GM12878 (cell line): ENCODE measurements at regions of chr12 and their contacts with region 1.

Region 1: DNA sequence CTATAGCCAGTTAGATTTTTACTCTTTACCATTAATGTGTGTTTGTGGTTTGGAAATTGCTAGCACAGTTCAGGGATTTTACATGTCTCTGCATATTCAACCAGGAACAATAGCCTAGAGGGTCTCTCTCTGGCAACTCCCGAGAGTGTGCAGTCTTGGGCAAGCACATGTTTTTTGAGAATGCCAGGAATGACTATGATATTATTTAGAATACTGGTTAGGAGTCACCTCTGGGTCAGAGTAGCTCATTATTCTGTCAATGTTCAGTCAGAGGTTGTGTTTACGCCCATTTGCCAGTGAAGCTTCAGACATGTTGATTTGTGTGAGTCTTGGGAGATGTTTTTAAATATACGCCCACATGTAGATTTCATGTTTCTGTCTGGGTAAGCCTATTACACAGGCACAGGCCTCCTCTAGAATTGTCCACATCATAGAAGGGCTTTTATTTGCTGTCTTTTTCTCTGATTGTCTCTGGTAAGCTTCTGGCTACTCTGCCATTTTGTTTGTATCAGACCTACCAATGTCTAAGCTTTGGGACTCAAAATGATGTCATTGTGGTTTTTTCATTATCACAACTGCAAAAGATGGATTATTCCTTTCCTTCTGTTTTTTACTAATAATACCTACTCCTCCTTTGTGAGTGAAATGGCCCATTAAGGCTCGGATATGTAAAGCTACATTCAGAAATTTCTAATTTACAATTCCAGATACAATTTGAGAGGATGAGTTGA is 203.1 kb upstream of the PPFIA2 start:
- DNase-seq: no peak
- ATAC-seq: peak; percentile 51
- H3K4me3 ChIP-seq: no peak overlapping the region
- H3K27ac ChIP-seq: no peak overlapping the region
- H3K4me1 ChIP-seq: no peaks in the 10 kb centered on the region
- H3K27me3 ChIP-seq: no peaks in the 10 kb centered on the region
- CTCF ChIP-seq: no peak
- EP300 ChIP-seq: no peak
- POLR2A ChIP-seq: no peak
- RAD21 ChIP-seq: no peak

Region 2: DNA sequence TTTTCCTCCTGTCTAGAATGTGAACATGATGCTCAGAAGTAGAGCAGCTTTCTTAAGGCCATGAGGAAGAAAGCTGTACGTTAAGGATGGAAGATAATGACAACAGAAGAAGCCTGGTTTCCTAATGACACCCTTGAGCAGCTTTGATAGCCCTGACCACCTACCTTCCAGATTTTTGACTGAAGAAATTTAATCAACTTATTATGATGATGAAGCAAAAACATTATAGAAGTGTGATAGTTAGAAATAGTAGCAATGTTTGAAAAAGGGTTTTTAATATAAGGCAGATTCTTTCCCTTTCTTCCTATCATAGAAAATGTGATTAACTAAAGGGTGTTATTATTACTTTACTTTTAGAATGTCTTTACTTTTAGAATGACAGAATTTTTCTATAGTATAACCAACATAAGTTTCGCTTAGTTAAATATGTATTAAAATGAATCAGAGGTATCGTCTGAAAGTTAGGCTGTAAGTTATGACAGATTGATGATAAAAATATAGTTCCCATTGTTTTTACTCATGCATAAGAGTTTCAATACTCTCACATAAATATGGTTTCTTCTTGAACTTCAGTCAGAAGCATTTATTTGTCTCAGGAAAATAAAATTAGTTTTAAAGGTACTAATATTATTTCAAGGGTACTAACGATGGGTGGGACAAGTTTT is 153.0 kb before region 1 on chr12:
- CTCF ChIA-PET with region 1: no interaction called
- POLR2A ChIA-PET with region 1: no interaction called
- RAD21 ChIA-PET with region 1: no interaction called
- SMC1A ChIA-PET with region 1: no interaction called
- in situ Hi-C with region 1: no loop called
- intact Hi-C with region 1: no loop called
- DNase-seq: no peak
- ATAC-seq: peak; percentile 69
- H3K4me3 ChIP-seq: no peak overlapping the region
- H3K27ac ChIP-seq: no peak overlapping the region
- H3K4me1 ChIP-seq: no peaks in the 10 kb centered on the region
- H3K27me3 ChIP-seq: no peaks in the 10 kb centered on the region
- CTCF ChIP-seq: no peak
- EP300 ChIP-seq: no peak
- POLR2A ChIP-seq: no peak
- RAD21 ChIP-seq: no peak

Region 3: DNA sequence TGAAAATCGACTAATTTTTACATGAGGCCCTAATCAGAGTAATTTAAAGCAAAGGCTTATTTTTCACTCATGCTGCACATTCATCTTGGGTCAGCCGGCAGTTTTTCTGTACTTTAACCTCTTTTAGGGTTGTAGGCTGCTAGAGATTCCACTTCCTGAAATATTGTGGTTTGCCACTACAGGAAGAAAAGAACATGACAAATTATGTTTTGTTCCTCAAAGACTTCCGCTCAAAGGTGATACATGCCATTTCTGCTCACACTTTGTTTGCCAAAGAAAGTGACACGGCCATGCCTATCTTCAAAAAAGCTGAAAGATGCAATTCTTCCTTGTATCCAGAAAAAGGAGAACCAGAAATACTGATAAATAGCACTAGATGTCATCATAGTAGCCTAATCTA is 19.7 kb before region 1 on chr12:
- CTCF ChIA-PET with region 1: interaction called, 9 read pairs
- POLR2A ChIA-PET with region 1: interaction called, 54 read pairs
- RAD21 ChIA-PET with region 1: interaction called, 41 read pairs
- SMC1A ChIA-PET with region 1: interaction called, 58 read pairs
- in situ Hi-C with region 1: no loop called
- intact Hi-C with region 1: no loop called
- DNase-seq: peak; percentile 15
- ATAC-seq: peak; percentile 85
- H3K4me3 ChIP-seq: no peak overlapping the region
- H3K27ac ChIP-seq: no peak overlapping the region
- H3K4me1 ChIP-seq: no peaks in the 10 kb centered on the region
- H3K27me3 ChIP-seq: no peaks in the 10 kb centered on the region
- CTCF ChIP-seq: no peak; a peak in 1 of 6 replicates
- EP300 ChIP-seq: peak; percentile 56 to 63; a peak in 2 of 4 replicates
- POLR2A ChIP-seq: no peak
- RAD21 ChIP-seq: no peak

Region 4: DNA sequence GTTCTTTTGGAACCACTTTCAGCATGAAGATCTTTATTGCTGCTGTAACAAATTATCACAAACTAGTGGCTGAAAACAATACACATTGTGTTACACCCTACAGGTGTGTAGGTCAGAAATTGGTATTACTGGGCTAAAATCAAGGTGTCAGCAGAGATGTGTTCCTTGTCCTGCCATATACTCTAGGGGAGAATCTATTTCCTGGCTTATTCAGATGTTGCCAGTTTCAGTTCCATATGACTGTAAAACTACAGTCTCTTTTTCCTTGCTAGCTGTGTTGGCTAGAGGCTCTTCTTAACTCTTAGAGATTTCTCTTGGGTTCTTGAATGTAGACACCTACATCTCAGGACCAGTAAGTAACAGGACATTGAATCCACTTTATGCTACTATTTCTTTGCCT is 12.5 kb after region 1 on chr12:
- CTCF ChIA-PET with region 1: interaction called, 11 read pairs
- POLR2A ChIA-PET with region 1: interaction called, 3 read pairs
- RAD21 ChIA-PET with region 1: interaction called, 8 read pairs
- SMC1A ChIA-PET with region 1: interaction called, 13 read pairs
- in situ Hi-C with region 1: no loop called
- intact Hi-C with region 1: no loop called
- DNase-seq: no peak
- ATAC-seq: peak; percentile 85
- H3K4me3 ChIP-seq: no peak overlapping the region
- H3K27ac ChIP-seq: no peak overlapping the region
- H3K4me1 ChIP-seq: no peaks in the 10 kb centered on the region
- H3K27me3 ChIP-seq: no peaks in the 10 kb centered on the region
- CTCF ChIP-seq: no peak
- EP300 ChIP-seq: no peak
- POLR2A ChIP-seq: no peak
- RAD21 ChIP-seq: no peak

Region 5: DNA sequence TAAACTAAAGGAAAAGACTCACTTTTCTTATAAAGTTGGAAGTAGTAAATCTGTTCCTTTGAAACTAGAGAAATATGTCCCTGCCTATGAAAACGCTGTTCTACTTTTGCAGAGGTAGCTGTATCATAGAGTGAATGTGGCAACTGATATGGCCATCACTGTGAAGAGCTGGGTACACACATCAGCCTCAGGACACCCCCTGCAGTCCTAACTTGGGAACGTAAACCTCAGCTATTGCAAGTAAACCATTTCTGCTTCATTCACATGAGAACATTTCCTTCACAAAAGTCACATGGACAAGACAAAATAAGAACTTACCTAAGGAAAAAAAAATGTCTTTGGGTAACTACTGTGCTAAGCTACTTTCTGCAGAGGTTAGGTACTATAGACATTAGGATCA is 30.2 kb after region 1 on chr12:
- CTCF ChIA-PET with region 1: interaction called, 11 read pairs
- POLR2A ChIA-PET with region 1: interaction called, 5 read pairs
- RAD21 ChIA-PET with region 1: interaction called, 23 read pairs
- SMC1A ChIA-PET with region 1: interaction called, 18 read pairs
- in situ Hi-C with region 1: no loop called
- intact Hi-C with region 1: no loop called
- DNase-seq: no peak
- ATAC-seq: peak; percentile 92
- H3K4me3 ChIP-seq: no peak overlapping the region
- H3K27ac ChIP-seq: no peak overlapping the region
- H3K4me1 ChIP-seq: no peaks in the 10 kb centered on the region
- H3K27me3 ChIP-seq: no peaks in the 10 kb centered on the region
- CTCF ChIP-seq: peak in 2 of 3 experiments; percentile 9 to 36; a peak in 3 of 6 replicates
- EP300 ChIP-seq: no peak
- POLR2A ChIP-seq: no peak
- RAD21 ChIP-seq: peak; percentile 10; the same call in 1 of the 2 replicates